ENCODE measurements at regions of chr16 and their contacts with region 1.

Region 1: GRCh38 chr16:27179500-27180072 is 23.7 kb upstream of the KDM8 start:
- DNase-seq: peak; percentile 98
- H3K4me3 Mint-ChIP-seq: no peak overlapping the region
- H3K27ac Mint-ChIP-seq: peak overlapping the region; percentile 67
- H3K4me1 Mint-ChIP-seq: peaks cover 48% of the 10 kb centered on the region
- H3K27me3 Mint-ChIP-seq: no peaks in the 10 kb centered on the region

Region 2: GRCh38 chr16:27066668-27067537 is 112.7 kb before region 1 on chr16 and contains the start of gene C16orf82:
- CTCF ChIA-PET with region 1: no interaction called
- intact Hi-C with region 1: no loop called
- DNase-seq: no peak
- H3K4me3 Mint-ChIP-seq: no peak within 1 kb of the TSS
- H3K27ac Mint-ChIP-seq: no peak within 1 kb of the TSS
- H3K4me1 Mint-ChIP-seq: no peaks in the 10 kb centered on the region
- H3K27me3 Mint-ChIP-seq: peaks cover 2% of the 10 kb centered on the region
- total RNA-seq, gene C16orf82: not detected

Region 3: DNA sequence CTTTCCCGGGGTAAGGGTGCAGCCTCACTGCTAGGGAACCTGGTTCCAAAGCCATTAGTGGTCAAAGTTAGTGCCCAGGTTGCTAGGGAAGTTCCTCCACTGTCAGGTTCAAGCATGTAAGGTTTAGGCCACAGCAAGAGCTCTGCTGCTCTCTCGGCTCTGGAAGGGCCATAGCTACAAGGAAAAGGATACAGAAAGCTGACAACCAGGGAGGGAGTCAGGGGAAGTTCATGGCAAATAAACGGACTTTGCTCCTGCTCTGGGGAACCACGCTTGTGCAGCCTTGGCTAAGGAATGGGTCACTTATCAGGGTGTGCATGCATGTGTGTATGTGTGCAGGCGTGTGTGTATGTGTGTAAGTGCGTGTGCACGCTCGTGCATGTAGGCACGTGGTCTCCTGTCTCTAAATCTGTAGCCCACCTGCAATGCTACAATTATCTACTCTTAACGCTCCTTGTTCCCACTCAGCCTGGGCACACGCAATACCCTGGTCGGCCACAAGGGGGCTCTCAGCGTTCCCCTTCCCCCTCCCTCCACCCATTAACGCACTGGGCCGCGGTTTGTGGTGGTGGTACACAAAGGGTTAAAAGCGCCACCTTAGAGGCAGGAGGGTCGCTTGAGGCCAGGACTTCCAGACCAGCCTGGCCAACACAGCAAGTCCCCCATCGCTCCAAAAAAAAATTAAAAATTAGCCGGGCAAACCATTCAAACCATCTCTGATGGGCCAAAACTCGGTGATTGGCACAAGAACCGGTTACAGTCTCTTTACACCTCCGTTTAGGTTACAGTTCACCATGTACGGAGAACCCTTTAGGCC is 24.7 kb before region 1 on chr16:
- CTCF ChIA-PET with region 1: interaction called, 23 read pairs
- intact Hi-C with region 1: no loop called
- DNase-seq: peak; percentile 83
- H3K4me3 Mint-ChIP-seq: no peak overlapping the region
- H3K27ac Mint-ChIP-seq: no peak overlapping the region
- H3K4me1 Mint-ChIP-seq: peaks cover 14% of the 10 kb centered on the region
- H3K27me3 Mint-ChIP-seq: no peaks in the 10 kb centered on the region

Region 4: GRCh38 chr16:27203429-27204231 is 24.0 kb after region 1 on chr16 and contains the start of gene KDM8:
- CTCF ChIA-PET with region 1: interaction called, 22 read pairs
- intact Hi-C with region 1: loop called (anchors 1 kb)
- DNase-seq: peak; percentile 100
- H3K4me3 Mint-ChIP-seq: peak within 1 kb of the TSS; percentile 99
- H3K27ac Mint-ChIP-seq: peak within 1 kb of the TSS; percentile 100
- H3K4me1 Mint-ChIP-seq: peaks cover 50% of the 10 kb centered on the region
- H3K27me3 Mint-ChIP-seq: no peaks in the 10 kb centered on the region
- total RNA-seq, gene KDM8: 11.3 to 13.9 TPM

Region 5: DNA sequence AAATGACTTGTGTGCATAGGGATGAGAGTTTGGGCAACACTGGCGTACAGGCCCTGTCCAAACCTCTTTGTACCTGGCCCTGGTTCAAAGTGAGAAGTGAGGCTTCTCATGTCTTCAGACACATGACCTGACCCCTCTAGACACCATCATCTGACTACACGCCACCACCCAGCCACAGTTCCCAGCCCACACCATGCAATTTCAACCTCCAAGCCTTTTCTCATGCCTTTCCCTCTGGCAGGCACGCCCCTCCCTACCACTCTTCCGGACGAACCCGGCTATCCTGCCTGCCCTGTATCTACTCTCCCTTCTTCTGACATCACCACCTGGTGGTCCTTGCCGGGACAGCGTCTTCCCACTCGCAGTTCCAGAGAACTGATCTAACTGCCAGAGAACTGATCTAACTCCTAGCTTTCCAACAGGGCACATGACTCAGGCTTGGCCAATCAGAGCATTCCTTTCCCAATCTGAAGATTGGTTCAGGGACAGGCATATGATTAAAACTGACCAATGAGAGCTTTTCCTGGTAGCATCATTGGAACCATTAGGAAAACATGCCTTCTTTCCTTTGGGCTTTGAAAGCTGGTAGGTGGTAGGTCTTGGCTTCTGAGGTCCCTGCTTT is 195.3 kb after region 1 on chr16:
- CTCF ChIA-PET with region 1: interaction called, 70 read pairs
- intact Hi-C with region 1: no loop called
- DNase-seq: peak; percentile 81
- H3K4me3 Mint-ChIP-seq: no peak overlapping the region
- H3K27ac Mint-ChIP-seq: no peak overlapping the region
- H3K4me1 Mint-ChIP-seq: peaks cover 47% of the 10 kb centered on the region
- H3K27me3 Mint-ChIP-seq: no peaks in the 10 kb centered on the region

Region 6: DNA sequence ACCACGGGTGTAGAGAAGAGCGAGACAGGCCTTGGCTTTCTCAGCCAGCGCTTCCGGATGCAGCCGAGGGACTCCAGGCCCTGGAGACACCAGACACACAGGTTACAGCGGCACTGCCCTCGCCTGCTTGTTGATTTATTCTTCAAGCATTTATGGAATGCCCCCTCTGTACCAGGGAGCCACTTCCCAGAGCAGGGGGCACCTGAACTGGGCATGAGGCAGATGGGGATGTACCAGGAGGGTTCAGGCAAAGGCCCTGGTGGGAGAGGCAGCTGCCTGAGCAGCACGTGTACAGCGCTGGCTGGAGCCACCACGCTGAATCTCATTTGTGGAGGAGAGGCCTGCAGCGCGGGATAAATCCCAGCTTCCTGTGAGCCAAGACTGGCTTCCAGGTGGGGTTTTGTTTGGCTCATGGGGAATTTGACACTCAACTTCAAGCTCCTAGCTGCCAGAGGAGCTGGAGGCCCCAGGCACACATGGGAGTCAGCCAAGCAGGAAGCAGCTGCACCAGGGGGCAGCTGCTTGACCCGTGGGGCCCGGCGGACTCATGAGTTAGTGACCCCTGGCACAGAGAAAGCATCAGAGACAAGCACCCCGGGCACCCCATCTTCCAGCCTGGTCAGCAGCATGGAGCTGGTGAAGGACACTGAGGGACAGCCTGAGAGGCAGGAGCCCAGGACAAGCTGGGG is 282.0 kb after region 1 on chr16:
- CTCF ChIA-PET with region 1: interaction called, 5 read pairs
- intact Hi-C with region 1: loop called (anchors 1 kb)
- DNase-seq: no peak
- H3K4me3 Mint-ChIP-seq: no peak overlapping the region
- H3K27ac Mint-ChIP-seq: no peak overlapping the region
- H3K4me1 Mint-ChIP-seq: peaks cover 30% of the 10 kb centered on the region
- H3K27me3 Mint-ChIP-seq: no peaks in the 10 kb centered on the region

Measured in activated naive CD4-positive, alpha-beta T cell treated with anti-CD3 and anti-CD28 coated beads for 36 hours (primary cell).